Sciatic nerve (tissue), 2 donors: ENCODE measurements at regions of chr2 and their contacts with region 1.

Region 1: DNA sequence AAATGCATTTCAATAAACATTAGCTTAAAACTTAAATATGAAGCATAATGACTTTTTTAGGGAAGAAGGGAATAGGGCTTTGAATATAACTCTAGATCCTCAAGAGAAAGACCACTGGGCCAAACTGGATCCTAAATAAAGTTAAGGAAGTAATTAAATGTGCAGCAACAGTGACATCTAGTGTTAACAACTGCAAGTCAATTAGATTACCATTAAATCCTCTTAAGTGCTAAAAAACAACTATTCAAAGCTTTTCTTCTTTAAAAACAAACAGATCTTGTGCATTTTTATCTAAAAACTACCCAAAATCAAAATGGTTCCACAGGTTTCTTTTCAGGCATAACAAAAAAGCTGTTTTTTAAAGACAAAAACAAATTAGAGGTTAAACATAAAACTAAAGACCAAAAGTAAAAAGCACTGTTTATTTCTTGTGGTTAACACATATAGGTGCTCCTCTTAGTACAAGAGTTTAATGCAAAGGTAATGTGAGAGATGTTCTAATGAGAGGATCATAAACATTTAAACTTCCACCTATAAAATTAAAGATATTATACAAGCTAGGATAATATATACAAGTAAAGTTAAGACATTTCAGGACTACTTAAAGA is 111.4 kb downstream of the THADA start:
- DNase-seq: no peak
- ATAC-seq: peak; percentile 70

Region 2: DNA sequence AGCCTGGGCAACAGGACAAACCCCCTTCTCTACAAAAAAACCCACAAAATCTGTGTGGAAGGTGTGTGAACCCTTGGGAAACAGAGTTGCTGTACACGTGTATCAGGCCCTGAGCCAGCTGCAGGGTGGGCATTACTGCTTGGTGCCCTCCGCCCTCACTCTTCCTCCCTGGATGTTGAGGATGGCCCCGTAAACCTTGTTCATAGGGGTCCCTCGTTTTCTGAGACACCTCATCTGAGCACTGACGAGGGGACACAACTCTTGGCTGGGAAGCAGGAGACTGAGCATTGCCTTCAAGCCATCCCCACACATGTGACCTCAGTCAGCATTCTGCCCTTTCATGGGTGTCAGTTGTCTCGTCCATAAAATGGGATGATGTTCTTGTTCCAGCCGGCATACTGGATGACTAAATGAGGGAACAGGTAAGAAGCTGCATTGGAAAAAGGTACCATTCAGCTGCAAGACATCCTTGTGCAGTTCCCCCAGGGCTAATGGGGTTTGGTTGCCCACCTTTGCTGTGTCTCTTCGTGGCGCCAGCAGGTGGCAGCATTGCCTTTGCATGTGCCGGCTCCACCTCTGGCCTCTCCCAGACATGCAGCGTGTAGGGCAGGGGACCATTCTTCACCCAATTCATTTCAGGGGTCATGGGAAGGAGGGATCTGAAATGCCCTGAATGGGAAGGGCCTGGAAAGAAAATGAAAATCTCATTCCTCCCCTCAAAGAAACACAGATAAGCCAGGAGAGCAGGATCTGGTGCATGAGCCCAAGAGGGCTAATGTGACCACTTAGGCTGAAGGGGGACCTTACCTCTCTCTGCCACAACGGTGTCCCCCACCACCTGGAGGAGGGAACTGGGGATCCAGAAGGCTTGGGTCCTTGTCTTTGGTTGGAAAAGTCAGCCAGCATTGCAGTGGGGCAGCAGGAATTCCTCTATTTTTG is 655.7 kb before region 1 on chr2:
- intact Hi-C with region 1: loop called (anchors 5 kb)
- DNase-seq: peak; percentile 90
- ATAC-seq: peak; percentile 93

Region 3: DNA sequence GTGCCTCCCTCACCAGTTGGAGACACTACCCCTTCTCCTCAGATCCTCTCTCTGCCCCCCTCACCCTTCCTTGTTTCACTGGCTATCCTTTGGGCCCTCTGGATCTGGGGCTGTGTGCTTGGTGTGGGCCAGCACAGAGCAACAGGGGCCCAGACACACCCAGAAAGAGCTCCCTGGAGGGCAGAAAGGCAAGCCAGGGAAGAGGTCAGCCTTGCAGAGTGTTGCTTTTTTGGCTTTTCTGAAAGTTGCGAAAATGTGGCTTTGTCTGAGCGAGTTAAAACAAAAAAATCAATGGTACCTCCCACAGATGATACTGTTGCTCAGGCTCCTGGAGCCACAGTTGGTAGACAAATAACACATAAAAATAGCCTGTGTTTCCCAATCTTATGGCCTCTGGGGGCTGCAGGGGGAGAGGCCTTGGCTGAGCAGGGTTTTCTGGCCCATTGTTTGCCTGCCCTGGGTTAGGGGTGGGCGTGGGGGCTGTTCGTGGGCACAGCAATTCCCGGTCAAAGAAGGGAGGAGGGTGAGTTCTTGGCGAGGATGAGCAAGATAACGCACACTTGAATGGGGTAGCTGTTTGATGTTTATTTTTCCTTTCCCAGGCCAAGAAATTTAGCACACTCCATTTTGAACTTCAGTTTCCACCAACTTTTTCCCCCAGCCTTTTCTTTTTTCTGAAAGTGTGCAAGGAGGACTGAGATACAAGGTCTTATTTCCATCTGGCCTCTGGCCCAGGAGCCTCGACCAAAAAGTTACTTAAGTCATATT is 525.0 kb before region 1 on chr2:
- intact Hi-C with region 1: loop called (anchors 10 kb)
- DNase-seq: peak; percentile 78
- ATAC-seq: peak; percentile 88

Region 4: DNA sequence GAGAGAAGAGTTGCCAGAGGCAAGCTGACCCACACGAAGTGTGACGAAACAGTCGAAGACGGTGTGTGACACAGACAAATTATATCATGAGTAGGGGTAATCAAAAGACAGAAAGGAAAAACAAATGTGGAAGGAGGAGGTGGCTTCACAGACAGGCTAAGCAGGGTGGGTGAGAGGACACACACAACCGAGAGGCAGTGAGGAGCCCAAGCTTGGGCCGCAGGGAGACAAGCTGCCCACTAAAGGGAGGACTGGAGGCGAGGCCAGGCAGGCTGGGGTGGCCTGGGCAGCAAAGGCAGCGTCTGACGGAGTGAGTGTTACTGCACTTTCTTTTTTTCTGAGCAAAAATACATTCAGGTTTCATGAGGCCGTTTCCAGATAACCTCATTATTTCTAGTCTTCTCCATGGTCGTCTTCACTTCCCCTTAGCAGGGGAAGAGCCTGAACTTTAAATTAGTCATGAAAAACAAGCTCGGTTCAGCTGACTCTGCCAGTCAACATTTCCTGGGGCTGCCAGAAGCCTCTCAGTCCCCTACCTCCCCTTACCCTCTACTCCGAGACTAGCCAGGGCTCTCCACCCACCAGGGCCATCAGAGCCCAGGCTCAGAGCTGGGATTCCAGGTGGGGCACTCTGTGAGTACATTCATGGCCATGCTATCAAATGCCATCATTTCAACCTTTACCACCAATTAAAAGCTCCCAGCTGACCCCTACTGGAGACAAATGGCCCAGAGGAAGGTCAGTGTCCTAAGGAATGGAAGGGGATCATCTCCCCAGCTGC is 244.3 kb before region 1 on chr2:
- intact Hi-C with region 1: loop called (anchors 10 kb)
- DNase-seq: no peak
- ATAC-seq: peak; percentile 11

Region 5: GRCh38 chr2:43464590-43464989 is 19.8 kb before region 1 on chr2:
- intact Hi-C with region 1: no loop called
- DNase-seq: peak; percentile 60
- ATAC-seq: peak; percentile 82